GM10248 (cell line): ENCODE measurements at regions of chr6 and their contacts with region 1.

Region 1: DNA sequence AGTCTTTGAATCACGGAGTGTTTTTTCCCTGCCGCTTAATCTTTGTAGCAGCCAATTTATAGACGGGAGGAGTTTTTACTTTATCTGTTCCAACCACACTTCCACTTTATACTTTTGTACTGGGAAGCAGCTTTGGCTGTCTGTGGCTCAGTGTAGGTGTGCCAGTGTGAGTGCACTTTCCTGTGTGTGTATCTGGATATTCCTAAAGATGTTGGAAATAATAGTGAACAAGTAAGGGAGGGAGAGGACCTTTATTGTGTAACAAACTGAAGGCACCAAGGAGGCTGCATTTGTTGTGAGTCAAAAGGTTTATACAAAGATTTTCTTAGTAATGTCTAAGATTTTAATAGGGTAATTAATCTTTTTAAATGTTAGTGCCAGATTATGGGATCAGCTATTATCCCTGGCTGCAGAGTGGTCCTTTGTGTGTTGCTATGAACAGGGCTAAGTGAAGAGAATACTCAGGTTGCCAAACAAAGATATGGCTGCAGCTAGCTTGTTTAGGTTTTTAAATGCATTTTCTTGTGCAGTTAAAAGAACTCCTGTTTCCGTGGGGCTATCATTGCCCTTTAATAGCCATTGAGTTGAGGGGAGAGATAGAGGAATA is 226.3 kb downstream of the RNF144B start:
- DNase-seq: no peak
- CTCF ChIP-seq: no peak

Region 2: GRCh38 chr6:18595774-18596530 is 17.5 kb before region 1 on chr6:
- CTCF ChIA-PET with region 1: interaction called, 14 read pairs
- POLR2A ChIA-PET with region 1: no interaction called
- DNase-seq: peak; percentile 37
- CTCF ChIP-seq: peak; percentile 86

Region 3: DNA sequence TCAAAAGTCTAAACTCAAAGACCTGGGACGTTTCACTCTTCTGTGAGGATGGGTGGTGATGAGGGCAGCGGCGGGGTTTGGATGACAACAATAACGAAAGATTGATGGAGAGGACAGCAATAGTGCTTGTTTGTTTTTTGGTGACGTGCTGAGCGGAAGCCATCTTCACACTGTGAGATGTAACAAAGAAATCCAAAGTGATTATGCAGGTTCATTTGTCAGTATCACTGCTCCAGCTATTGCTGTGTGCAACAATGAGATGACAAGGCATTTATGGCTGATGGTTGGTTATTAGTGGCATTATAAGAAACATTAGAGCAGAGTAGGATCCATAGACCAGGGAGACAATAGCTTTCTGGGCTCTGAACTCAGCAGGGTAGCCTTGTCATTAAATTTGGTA is 80.5 kb after region 1 on chr6:
- CTCF ChIA-PET with region 1: no interaction called
- POLR2A ChIA-PET with region 1: no interaction called
- DNase-seq: no peak
- CTCF ChIP-seq: no peak

Region 4: DNA sequence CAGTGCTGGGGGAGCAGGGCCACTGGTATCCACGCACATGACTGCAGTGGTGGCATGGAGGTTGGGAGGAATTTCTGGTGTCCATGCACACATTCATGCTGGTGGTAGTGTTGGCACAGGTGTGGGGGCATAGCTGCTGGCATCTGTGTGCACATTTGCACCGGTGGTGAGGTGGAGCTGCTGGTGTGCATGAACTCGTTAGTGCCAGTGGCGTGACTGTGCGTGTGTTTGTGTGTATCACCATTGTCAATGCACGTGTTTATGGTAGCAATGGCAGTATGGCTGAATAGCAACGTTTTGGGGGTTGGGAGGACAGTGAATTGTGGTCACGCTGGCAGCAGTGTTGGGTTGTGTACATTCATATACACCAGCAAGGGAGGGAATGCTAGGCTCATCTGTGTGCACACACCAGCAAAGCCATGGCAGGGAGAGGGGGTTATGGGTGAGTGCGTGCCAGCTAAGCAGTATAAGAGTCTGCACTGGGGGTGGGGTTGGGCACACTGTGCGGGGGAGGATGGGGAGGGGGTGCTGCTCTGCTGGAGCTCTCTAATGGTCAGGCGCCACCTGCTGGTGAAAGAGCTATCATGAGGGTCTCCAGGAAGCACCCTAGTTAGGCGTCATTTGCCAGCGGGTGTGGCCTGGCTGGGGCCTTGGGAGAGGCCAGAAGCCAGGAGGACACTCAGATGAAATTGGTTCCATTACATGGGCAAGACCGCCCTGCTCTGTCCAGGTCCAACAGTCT is 597.6 kb after region 1 on chr6:
- CTCF ChIA-PET with region 1: no interaction called
- POLR2A ChIA-PET with region 1: no interaction called
- DNase-seq: peak; percentile 12
- CTCF ChIP-seq: peak; percentile 6